ENCODE measurements at regions of chr5 and their contacts with region 1.

Region 1: DNA sequence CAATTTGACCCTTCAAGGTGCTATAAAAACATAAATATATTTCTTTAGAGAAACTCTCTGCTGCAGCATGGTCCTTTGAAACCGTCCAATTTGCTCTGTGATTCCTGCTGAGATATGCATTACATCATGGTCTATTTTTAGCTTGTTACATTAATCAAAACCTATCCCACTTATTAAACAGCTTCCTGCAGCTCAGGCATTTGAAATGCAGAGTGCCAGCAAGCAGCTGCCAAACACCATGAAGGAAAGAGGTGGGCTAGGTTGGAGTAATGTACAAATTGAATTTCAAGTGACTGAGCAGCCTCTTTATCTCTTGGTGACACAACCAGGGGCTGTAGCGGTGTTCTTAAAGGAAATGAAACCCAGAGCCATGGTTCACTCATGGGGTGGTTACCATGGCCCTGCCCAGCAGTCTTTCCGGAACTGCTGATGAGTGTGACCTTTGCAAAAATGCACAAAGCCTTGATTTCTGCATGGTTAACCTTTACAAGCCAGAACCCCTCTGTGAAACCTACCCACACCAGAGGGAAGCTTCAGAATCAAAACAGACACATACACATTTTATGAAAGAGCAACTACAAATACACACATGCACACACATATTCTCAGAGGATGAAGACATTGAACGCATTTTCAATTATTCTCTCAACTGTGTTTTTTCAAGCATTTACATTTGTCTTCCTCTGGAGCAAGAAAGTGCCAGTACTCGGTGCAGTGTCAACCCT is 155.8 kb upstream of the ZNF608 start:
- DNase-seq: no peak
- ATAC-seq: no peak
- H3K4me3 ChIP-seq: no peak overlapping the region
- H3K27ac ChIP-seq: peak overlapping the region in 1 of 4 donors; percentile 8
- H3K4me1 ChIP-seq: peaks cover 34 to 38% of the 10 kb centered on the region in 2 donors
- H3K27me3 ChIP-seq: no peaks in the 10 kb centered on the region
- CTCF ChIP-seq: no peak
- POLR2A ChIP-seq: no peak

Region 2: GRCh38 chr5:124536333-124536732 is 365.9 kb before region 1 on chr5:
- in situ Hi-C with region 1: no loop called
- intact Hi-C with region 1: loop called (anchors 10 kb)
- DNase-seq: peak; percentile 20 to 43
- ATAC-seq: peak; percentile 84 to 89
- H3K4me3 ChIP-seq: no peak overlapping the region
- H3K27ac ChIP-seq: peak overlapping the region; percentile 1 to 74 (median 50)
- H3K4me1 ChIP-seq: peaks cover 6 to 25% of the 10 kb centered on the region in 2 donors
- H3K27me3 ChIP-seq: no peaks in the 10 kb centered on the region
- CTCF ChIP-seq: no peak
- POLR2A ChIP-seq: no peak

Region 3: DNA sequence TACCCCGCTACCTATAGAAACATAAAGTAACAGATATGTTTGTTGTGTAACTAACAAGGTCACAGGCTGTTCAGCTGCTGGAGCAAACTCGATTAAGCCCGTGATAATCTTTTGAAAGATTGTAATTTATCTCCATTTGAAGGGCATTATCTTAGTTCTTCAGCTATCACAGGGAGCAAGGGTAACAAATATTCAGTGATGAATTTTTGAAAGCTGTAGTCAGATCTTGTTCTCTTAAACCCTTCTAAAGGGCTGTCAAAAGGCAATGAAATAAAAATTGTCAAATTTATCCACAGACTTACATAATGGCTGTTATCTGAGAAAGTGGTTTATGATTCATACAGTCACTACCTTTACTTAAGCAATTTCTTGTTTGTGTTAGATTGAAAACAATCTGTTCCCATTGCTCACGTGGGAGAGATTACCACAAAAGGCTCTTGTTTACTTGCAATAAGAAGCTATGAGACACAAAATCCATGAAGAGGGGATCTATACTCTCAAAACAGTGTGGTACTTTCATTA is 77.6 kb before region 1 on chr5:
- in situ Hi-C with region 1: no loop called
- intact Hi-C with region 1: loop called (anchors 5 kb)
- DNase-seq: peak in 1 of 2 donors; percentile 37
- ATAC-seq: peak; percentile 94 to 96
- H3K4me3 ChIP-seq: no peak overlapping the region
- H3K27ac ChIP-seq: peak overlapping the region in 3 of 4 donors; percentile 34 to 72 (median 51)
- H3K4me1 ChIP-seq: peaks cover 3 to 4% of the 10 kb centered on the region in 2 donors
- H3K27me3 ChIP-seq: no peaks in the 10 kb centered on the region
- CTCF ChIP-seq: peak in 1 of 5 experiments; percentile 8
- POLR2A ChIP-seq: no peak

Region 4: DNA sequence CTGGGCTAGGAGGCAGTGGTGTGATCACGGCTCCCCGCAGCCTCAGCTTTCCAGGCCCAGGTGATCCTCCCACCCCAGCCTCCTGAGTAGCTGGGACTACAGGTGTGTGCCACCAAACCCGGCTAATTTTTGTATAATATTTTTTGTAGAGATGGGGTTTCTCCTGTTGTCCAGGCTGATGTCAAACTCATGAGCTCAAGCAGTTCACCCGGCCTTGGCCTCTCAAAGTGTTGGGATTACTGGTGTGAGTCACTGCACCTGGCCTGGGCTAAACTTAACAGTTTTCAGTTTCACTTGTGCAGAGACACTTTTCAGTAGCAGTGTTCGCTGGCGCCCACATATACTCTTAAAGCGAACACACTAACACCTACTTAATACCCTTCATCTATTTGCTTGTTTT is 49.8 kb after region 1 on chr5:
- in situ Hi-C with region 1: no loop called
- intact Hi-C with region 1: loop called (anchors 2 kb)
- DNase-seq: peak in 1 of 2 donors; percentile 16
- ATAC-seq: peak in 1 of 2 donors; percentile 51
- H3K4me3 ChIP-seq: no peak overlapping the region
- H3K27ac ChIP-seq: peak overlapping the region in 1 of 4 donors; percentile 19
- H3K4me1 ChIP-seq: peaks cover 8 to 14% of the 10 kb centered on the region in 2 donors
- H3K27me3 ChIP-seq: no peaks in the 10 kb centered on the region
- CTCF ChIP-seq: no peak
- POLR2A ChIP-seq: no peak